H1 (cell line): ENCODE measurements at regions of chr12 and their contacts with region 1.

Region 1: DNA sequence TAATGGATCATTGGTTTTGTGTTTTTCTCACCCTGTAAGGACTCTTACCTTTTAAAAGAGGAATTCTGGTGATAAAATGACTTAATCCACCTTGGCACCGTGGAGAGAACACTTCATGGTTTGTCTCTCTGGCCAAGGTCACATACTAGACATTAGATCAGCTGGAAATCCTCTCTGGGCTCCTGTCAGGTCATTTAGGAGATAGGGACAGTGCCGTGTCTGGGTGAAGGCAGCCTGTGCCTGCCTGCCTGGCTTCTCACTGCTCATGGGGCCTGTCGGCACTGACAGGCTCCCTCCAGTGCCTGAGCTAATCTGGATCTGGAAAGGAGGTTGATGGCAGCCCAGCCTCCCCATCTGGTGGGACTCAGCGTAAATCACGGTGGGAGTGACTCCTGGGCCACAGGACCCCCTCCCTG is 5.7 kb downstream of the CRADD start:
- DNase-seq: no peak
- H3K4me3 ChIP-seq: no peak overlapping the region
- H3K27ac ChIP-seq: no peak overlapping the region
- H3K4me1 ChIP-seq: peaks cover 3 to 5% (median 4%) of the 10 kb centered on the region in 4 experiments; a peak in 4 of 7 replicates
- H3K27me3 ChIP-seq: no peaks in the 10 kb centered on the region
- CTCF ChIP-seq: no peak
- EP300 ChIP-seq: no peak
- POLR2A ChIP-seq: no peak
- RAD21 ChIP-seq: 0 out of 4 replicates have a peak, but pooled peaks of 1 of the 2 experiments have one; percentile 25

Region 2: GRCh38 chr12:93699271-93700145 is 16.7 kb after region 1 on chr12:
- CTCF ChIA-PET with region 1: interaction called, 15 read pairs
- POLR2A ChIA-PET with region 1: interaction called, 5 read pairs
- DNase-seq: no peak
- H3K4me3 ChIP-seq: peak overlapping the region in 1 of 4 experiments; percentile 13; a peak in 1 of 8 replicates
- H3K27ac ChIP-seq: peak overlapping the region; percentile 30; the same call in 1 of the 2 replicates
- H3K4me1 ChIP-seq: peaks cover 7 to 21% (median 12%) of the 10 kb centered on the region in 4 experiments; a peak in 5 of 7 replicates
- H3K27me3 ChIP-seq: no peaks in the 10 kb centered on the region
- CTCF ChIP-seq: no peak
- EP300 ChIP-seq: no peak
- POLR2A ChIP-seq: no peak
- RAD21 ChIP-seq: no peak